Calu3 (cell line): ENCODE measurements at regions of chr6 and their contacts with region 1.

Region 1: GRCh38 chr6:78989191-78989590 is 88.9 kb downstream of the PHIP start:
- DNase-seq: no peak
- H3K4me3 Mint-ChIP-seq: no peak overlapping the region
- H3K27ac Mint-ChIP-seq: no peak overlapping the region
- H3K4me1 Mint-ChIP-seq: no peaks in the 10 kb centered on the region
- H3K27me3 Mint-ChIP-seq: no peaks in the 10 kb centered on the region
- CTCF ChIP-seq: no peak

Region 2: DNA sequence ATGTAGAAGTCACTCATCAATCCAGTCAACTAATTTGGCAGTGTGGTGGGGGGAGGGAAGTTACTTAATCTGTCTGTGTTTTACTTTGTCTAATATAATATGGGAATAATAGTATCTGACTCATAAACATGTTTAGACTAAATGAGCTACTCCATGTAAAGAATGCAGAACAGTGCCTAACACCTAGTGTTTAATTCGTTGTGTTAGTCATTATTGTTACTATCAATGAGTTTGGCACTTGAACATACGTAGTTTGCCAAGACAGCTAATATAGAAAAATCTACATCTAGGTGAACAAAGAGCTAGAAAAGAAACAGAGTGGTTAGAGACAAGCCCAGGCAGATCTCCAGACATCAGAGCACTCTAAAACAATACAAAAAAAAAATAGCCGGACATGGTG is 72.8 kb before region 1 on chr6:
- CTCF ChIA-PET with region 1: no interaction called
- intact Hi-C with region 1: no loop called
- DNase-seq: no peak
- H3K4me3 Mint-ChIP-seq: no peak overlapping the region
- H3K27ac Mint-ChIP-seq: no peak overlapping the region
- H3K4me1 Mint-ChIP-seq: peaks cover 3% of the 10 kb centered on the region
- H3K27me3 Mint-ChIP-seq: no peaks in the 10 kb centered on the region
- CTCF ChIP-seq: no peak

Region 3: GRCh38 chr6:78999737-79000136 is 10.5 kb after region 1 on chr6:
- CTCF ChIA-PET with region 1: no interaction called
- intact Hi-C with region 1: loop called (anchors 1 kb)
- DNase-seq: no peak
- H3K4me3 Mint-ChIP-seq: no peak overlapping the region
- H3K27ac Mint-ChIP-seq: no peak overlapping the region
- H3K4me1 Mint-ChIP-seq: no peaks in the 10 kb centered on the region
- H3K27me3 Mint-ChIP-seq: no peaks in the 10 kb centered on the region
- CTCF ChIP-seq: no peak